H1 (cell line): ENCODE measurements at regions of chr9 and their contacts with region 1.

Region 1: GRCh38 chr9:131178382-131178781 is 53.0 kb downstream of the NUP214 start:
- DNase-seq: peak; percentile 25 to 87
- H3K4me3 ChIP-seq: no peak overlapping the region
- H3K27ac ChIP-seq: no peak overlapping the region
- H3K4me1 ChIP-seq: no peaks in the 10 kb centered on the region
- H3K27me3 ChIP-seq: no peaks in the 10 kb centered on the region
- CTCF ChIP-seq: peak; percentile 93 to 99 (median 97)
- EP300 ChIP-seq: no peak
- POLR2A ChIP-seq: no peak
- RAD21 ChIP-seq: peak; percentile 83 to 87

Region 2: GRCh38 chr9:131024978-131025868 is 153.2 kb before region 1 on chr9:
- CTCF ChIA-PET with region 1: no interaction called
- POLR2A ChIA-PET with region 1: no interaction called
- DNase-seq: no peak
- H3K4me3 ChIP-seq: no peak overlapping the region
- H3K27ac ChIP-seq: no peak overlapping the region; the same call in 1 of the 2 replicates
- H3K4me1 ChIP-seq: peaks cover 0 to 2% (median 0%) of the 10 kb centered on the region in 4 experiments; a peak in 2 of 7 replicates
- H3K27me3 ChIP-seq: no peaks in the 10 kb centered on the region
- CTCF ChIP-seq: no peak
- EP300 ChIP-seq: no peak
- POLR2A ChIP-seq: no peak
- RAD21 ChIP-seq: no peak

Region 3: GRCh38 chr9:131160416-131161112 is 17.8 kb before region 1 on chr9:
- CTCF ChIA-PET with region 1: interaction called, 10 read pairs
- POLR2A ChIA-PET with region 1: interaction called, 3 read pairs
- DNase-seq: no peak
- H3K4me3 ChIP-seq: no peak overlapping the region
- H3K27ac ChIP-seq: no peak overlapping the region
- H3K4me1 ChIP-seq: no peaks in the 10 kb centered on the region
- H3K27me3 ChIP-seq: no peaks in the 10 kb centered on the region
- CTCF ChIP-seq: no peak
- EP300 ChIP-seq: no peak
- POLR2A ChIP-seq: no peak
- RAD21 ChIP-seq: no peak

Region 4: DNA sequence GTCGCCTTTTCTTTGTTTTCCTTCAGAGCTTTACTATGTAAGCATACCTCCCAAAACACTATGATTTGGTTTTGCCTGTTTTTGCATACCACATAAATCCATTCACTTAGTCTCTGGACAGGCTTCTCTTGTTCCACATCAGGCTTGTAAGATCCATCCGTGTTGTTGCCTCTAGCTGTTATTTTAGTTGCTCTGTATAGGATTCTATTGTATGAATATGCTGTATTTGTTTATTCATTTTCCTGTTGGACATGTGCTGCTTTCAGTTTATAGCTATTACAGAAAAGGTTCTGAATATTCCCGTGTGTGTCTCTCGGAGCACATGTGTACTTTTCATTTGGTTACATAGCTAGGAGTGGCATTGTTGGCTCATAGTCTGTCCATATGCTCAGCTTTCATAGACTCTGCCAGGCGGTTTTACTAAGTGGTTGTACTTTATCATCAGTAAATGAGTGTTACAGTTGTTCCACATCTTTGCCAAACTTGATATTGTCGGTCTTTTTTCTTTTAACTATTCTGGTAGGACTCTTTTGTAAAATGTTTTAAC is 11.2 kb before region 1 on chr9:
- CTCF ChIA-PET with region 1: interaction called, 18 read pairs
- POLR2A ChIA-PET with region 1: no interaction called
- DNase-seq: no peak
- H3K4me3 ChIP-seq: no peak overlapping the region
- H3K27ac ChIP-seq: no peak overlapping the region
- H3K4me1 ChIP-seq: no peaks in the 10 kb centered on the region
- H3K27me3 ChIP-seq: no peaks in the 10 kb centered on the region
- CTCF ChIP-seq: no peak
- EP300 ChIP-seq: no peak
- POLR2A ChIP-seq: no peak
- RAD21 ChIP-seq: no peak

Region 5: GRCh38 chr9:131203431-131204218 is 25.2 kb after region 1 on chr9:
- CTCF ChIA-PET with region 1: interaction called, 120 read pairs
- POLR2A ChIA-PET with region 1: interaction called, 4 read pairs
- DNase-seq: no peak
- H3K4me3 ChIP-seq: peak overlapping the region in 1 of 4 experiments; percentile 18; a peak in 1 of 8 replicates
- H3K27ac ChIP-seq: no peak overlapping the region
- H3K4me1 ChIP-seq: peaks cover 0 to 6% (median 2%) of the 10 kb centered on the region in 4 experiments; a peak in 2 of 7 replicates
- H3K27me3 ChIP-seq: no peaks in the 10 kb centered on the region
- CTCF ChIP-seq: peak; percentile 65 to 80 (median 79)
- EP300 ChIP-seq: no peak
- POLR2A ChIP-seq: no peak
- RAD21 ChIP-seq: peak; percentile 47 to 63

Region 6: DNA sequence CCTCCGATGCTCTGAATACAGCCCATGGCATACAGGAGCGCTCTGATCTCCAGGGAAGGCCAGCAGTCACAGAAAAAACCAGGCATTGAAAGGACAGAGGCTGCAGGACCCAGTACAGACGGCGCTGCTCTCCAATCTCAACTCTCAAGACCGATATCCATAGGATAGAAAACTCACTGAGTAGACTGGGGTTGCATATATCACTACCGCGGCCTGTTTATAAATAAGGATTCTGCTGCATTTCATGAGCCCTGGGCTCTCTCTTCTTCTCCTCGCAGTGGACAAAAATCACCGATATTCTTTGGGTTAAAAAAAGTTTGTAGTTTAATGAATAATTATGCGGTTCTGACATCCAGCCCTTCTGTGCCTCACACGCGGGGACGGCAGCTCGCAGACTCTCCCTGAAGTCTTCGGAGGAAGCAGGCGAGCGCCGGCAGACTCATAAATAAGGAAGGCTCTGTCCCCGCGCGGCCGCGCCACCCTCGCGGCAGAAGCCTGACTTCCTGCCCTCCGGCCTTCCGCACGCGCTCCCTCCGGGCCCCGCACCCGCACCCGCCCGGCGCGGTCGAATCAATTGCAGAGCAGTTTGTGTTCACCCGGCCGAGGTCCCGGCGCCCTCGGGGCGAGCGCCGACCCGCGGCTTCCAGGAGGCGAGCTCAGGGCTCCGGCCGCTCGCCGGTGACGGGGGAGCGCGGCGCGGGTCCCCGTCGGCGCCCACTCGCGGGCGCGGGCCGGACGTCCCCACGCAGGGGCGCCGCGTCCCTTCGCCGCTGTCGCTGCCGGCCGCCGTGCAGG is 97.9 kb after region 1 on chr9 and contains the start of gene FAM78A:
- CTCF ChIA-PET with region 1: interaction called, 14 read pairs
- POLR2A ChIA-PET with region 1: no interaction called
- DNase-seq: no peak
- H3K4me3 ChIP-seq: peak within 1 kb of the TSS; percentile 42 to 72 (median 47)
- H3K27ac ChIP-seq: no peak within 1 kb of the TSS
- H3K4me1 ChIP-seq: peaks cover 0 to 15% (median 7%) of the 10 kb centered on the region in 4 experiments; a peak in 5 of 7 replicates
- H3K27me3 ChIP-seq: peaks cover 2 to 21% (median 13%) of the 10 kb centered on the region in 4 experiments; a peak in 6 of 7 replicates
- CTCF ChIP-seq: no peak
- EP300 ChIP-seq: no peak
- POLR2A ChIP-seq: no peak
- RAD21 ChIP-seq: no peak
- total RNA-seq, gene FAM78A: 3.1 and 3.5 TPM in 2 replicates

Region 7: DNA sequence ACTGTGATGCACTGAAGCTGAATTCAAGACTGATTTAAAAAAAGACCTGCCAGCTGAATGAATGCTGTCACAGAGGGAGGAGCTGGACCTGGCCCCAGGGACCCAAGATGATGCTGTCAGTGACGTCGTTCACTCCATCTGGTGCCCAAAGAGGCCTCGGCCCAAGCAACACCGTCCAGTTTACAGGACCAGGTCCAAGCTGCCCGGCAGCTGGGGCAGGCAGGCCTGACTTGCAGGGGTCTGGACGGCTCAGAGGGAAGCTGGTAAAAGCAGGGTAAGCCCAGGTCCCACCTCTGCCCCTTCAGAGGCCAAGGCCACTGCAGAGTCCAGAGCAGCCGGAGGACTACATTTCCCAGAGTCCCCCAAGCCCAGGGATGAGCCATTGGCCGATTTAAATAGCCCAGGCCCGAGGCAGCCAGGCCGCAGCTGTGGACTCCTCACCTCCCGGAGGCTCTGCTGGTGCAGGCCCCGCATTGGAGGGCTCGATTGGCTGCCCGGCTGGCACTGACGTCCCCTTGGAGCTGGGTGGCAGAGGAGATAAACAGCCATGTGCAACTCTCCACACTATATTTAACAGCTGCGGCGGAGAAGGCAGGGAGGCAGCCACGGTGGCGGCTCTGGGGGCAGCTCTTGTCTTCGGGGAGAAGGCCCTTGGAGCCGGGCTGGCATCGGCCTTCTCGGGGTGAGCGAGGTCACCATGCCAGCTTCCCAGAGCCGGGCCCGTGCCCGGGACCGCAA is 111.1 kb after region 1 on chr9 and contains the start of gene PLPP7:
- CTCF ChIA-PET with region 1: interaction called, 10 read pairs
- POLR2A ChIA-PET with region 1: no interaction called
- DNase-seq: peak in 1 of 2 experiments; percentile 77
- H3K4me3 ChIP-seq: peak within 1 kb of the TSS in 1 of 4 experiments; percentile 16; a peak in 1 of 8 replicates
- H3K27ac ChIP-seq: no peak within 1 kb of the TSS
- H3K4me1 ChIP-seq: peaks cover 0 to 14% (median 8%) of the 10 kb centered on the region in 4 experiments; a peak in 6 of 7 replicates
- H3K27me3 ChIP-seq: no peaks in the 10 kb centered on the region
- CTCF ChIP-seq: no peak
- EP300 ChIP-seq: no peak
- POLR2A ChIP-seq: no peak
- RAD21 ChIP-seq: no peak
- total RNA-seq, gene PLPP7: 3.4 TPM in 2 replicates

Region 8: DNA sequence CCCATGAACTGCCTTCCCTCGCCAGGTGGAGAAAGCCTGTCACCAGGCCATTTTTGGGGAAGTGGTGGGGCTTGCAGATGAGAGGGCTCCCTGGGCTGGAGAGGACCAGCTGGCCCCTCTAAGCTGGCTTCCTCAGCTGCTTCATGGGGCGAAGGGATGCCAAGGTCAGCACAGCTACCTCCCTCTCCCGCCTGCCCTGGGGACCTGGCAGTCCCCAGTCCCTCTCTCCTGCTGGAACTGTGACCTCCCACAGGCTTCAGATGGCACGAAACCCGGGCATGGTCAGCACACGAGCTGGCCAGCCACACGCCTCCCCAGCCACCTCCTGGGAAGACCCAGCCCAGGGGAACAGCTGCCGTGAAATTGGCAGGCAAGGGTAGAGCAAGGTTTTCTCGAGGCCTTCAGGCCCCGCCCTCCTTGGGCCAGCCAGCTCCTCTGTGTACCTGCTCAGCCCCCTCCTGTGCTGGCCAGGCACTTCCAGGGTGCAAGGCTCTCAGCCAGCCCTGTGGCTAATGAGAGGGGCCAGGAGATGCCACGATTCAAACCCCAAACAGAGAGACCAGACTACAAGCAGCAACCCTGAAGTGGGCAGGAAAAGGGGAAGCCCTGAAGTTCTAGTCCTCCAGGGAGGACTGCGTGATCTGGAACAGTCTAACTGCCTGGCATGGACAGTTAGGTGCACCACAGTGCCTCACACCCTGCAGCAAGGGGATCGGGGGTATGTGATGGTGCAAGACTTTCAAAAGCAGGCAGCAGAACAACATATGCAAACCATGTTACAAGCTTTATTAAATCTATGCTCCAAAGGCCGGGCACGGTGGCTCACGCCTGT is 124.1 kb after region 1 on chr9:
- CTCF ChIA-PET with region 1: interaction called, 10 read pairs
- POLR2A ChIA-PET with region 1: no interaction called
- DNase-seq: no peak
- H3K4me3 ChIP-seq: no peak overlapping the region
- H3K27ac ChIP-seq: no peak overlapping the region
- H3K4me1 ChIP-seq: peaks cover 0 to 5% (median 3%) of the 10 kb centered on the region in 4 experiments; a peak in 2 of 7 replicates
- H3K27me3 ChIP-seq: no peaks in the 10 kb centered on the region
- CTCF ChIP-seq: no peak
- EP300 ChIP-seq: no peak
- POLR2A ChIP-seq: no peak
- RAD21 ChIP-seq: no peak